ENCODE measurements at regions of chr20 and their contacts with region 1.

Region 1: GRCh38 chr20:1357921-1358671 is 29.2 kb upstream of the SDCBP2 start:
- DNase-seq: peak; percentile 60
- H3K4me3 Mint-ChIP-seq: peak overlapping the region; percentile 68
- H3K27ac Mint-ChIP-seq: peak overlapping the region; percentile 88
- H3K4me1 Mint-ChIP-seq: peaks cover 62% of the 10 kb centered on the region
- H3K27me3 Mint-ChIP-seq: no peaks in the 10 kb centered on the region

Region 2: GRCh38 chr20:956330-956951 is 401.7 kb before region 1 on chr20:
- intact Hi-C with region 1: no loop called
- DNase-seq: peak; percentile 65
- H3K4me3 Mint-ChIP-seq: no peak overlapping the region
- H3K27ac Mint-ChIP-seq: no peak overlapping the region
- H3K4me1 Mint-ChIP-seq: no peaks in the 10 kb centered on the region
- H3K27me3 Mint-ChIP-seq: peaks cover 20% of the 10 kb centered on the region

Region 3: GRCh38 chr20:1232286-1233111 is 125.6 kb before region 1 on chr20:
- intact Hi-C with region 1: no loop called
- DNase-seq: no peak
- H3K4me3 Mint-ChIP-seq: no peak overlapping the region
- H3K27ac Mint-ChIP-seq: no peak overlapping the region
- H3K4me1 Mint-ChIP-seq: peaks cover 11% of the 10 kb centered on the region
- H3K27me3 Mint-ChIP-seq: peaks cover 28% of the 10 kb centered on the region

Region 4: DNA sequence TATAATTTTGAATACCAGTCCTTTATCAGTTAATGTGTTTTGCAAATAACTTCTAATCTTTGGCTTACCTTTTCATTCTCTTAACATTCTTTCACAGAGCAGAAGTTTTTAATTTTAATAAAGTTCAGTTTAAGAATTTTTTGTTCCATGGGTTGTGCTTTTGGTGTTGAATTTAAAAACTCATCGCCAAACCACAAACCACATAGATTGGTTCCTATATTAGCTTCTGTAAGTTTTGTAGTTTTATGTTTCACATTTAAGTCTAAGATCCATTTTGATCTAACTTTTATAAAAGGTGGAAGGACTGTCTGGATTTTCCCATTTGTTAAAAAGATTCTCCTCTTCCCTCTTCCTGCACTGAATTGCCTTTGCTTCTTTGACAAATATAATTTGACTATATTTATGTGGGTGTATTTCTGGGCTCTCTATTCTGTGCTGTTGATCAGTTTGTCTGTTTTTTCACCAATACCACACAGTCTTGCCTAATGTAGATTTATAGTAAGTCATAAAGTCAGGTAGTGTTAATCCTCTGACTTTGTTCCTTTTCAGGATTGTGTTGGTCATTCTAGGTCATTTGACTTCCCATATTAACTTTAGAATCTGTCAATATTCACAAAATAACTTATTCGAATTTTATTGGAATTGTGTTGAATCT is 11.7 kb before region 1 on chr20:
- intact Hi-C with region 1: loop called (anchors 2 kb)
- DNase-seq: no peak
- H3K4me3 Mint-ChIP-seq: no peak overlapping the region
- H3K27ac Mint-ChIP-seq: no peak overlapping the region
- H3K4me1 Mint-ChIP-seq: peaks cover 32% of the 10 kb centered on the region
- H3K27me3 Mint-ChIP-seq: no peaks in the 10 kb centered on the region

Region 5: DNA sequence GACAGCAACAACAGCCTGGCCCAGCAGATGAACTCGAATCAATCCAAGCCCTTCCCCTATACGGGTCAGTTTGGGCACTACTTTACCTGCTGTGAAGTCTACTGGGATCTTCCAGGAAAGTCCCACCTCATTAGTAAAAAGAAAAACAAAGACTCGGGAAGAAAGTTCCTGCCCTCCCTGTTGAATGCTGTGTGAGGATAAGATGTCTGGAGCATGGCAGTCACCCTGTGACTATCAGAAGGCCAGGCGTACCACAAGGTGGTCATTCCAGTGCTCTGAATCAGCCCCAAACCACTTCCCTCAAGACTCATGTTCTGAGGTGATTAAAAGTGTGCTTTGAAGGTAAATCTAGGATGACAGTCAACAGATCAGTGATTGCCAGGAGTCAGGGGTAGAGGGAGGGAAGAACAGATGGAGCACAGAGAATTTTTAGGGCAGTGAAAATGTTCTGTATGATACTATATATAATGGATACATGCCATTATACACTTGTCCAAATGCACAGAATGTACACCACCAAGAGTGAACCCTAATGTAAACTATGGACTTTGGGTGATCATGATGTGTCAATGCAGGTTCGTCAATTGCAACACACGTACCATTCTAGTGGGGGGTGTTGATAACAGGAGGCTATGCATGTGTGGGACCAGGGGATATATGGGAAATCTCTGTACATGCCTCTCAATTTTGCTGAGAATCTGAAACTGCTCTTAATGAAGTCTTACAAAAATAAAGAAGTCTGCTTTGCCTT is 20.1 kb after region 1 on chr20:
- intact Hi-C with region 1: loop called (anchors 1 kb)
- DNase-seq: no peak
- H3K4me3 Mint-ChIP-seq: no peak overlapping the region
- H3K27ac Mint-ChIP-seq: peak overlapping the region; percentile 81
- H3K4me1 Mint-ChIP-seq: peaks cover 89% of the 10 kb centered on the region
- H3K27me3 Mint-ChIP-seq: no peaks in the 10 kb centered on the region